ENCODE measurements at regions of chr4 and their contacts with region 1.

Region 1: DNA sequence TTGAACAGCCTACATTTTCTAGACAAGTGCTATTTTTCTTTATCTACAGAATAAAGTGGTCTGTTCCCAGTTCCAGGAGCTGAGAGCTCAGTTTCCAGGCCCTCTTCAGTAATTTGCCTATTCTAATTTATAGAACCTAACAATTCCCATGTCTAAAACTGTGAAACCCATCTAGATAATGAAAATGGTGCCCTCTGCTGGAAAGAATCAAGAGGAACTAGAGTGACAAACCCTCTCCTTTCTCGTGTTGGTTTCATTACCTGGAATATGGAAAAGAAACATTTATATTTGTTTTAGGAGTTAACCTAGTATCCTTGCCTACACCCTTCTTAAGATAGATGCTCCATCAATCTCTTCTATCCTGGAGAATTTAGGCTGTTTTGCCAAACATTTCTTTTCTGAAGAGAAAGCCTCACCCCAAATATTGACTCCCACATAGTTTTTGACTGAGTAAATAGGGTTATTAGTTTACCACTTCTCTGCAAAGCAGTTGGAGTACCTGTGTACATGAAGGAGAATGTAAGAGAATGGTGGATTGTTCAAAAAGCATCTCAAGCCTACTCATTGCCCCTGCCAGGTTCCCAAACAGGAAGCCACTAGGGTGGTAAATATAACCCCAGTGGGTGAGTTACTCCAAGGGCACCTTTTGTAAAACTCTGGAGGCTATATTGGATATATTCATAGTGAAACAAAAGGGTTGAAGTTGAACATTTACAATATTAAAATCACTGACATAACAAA is 121.6 kb downstream of the RASL11B start:
- DNase-seq: no peak
- H3K4me3 Mint-ChIP-seq: no peak overlapping the region
- H3K27ac Mint-ChIP-seq: no peak overlapping the region
- H3K4me1 Mint-ChIP-seq: peaks cover 3% of the 10 kb centered on the region
- H3K27me3 Mint-ChIP-seq: no peaks in the 10 kb centered on the region

Region 2: DNA sequence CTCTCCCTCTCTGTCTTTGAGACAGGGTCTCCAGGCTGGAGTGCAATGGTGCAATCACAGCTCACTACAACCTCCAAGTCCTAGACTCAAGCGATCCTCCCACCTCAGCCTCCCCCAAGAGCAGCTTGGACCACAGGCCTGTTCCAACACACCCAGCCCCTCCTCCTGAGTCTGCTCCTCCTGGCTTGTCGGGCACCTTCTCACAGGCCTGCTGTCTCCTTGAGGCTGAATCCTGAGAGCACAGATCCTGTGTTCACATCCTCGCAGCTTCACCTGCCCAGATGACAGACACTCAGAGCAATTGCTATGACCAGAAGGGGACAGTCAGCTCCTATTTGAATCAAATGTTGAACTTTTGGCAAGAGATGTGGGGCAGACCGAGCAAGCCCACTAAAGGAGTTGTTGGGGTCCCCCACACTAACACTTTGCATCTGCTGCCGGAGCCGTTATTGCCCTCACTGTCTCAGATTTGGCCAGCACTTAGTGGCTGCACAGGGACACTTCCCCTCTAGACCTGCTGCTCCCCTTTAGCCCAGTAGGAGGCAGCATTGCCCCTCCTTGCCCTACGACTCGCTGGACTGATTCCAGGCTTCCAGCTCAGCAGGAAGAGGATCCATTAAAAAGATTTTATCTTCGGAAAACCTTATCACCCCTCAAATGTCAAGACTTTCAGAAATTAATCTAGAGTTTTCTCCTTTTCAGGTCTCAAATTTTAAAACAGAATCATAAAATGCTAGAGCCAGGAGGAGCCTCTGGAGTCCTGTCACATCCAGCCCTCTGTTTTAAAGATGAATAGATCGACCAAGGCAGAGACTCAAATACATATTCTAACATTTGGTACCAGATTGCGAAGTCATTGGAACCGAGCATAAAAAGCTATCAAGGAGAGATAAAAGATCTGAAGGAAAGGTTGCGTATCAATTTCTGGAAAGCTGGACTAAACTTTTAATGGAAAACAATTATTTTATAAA is 438.3 kb before region 1 on chr4:
- intact Hi-C with region 1: loop called (anchors 5 kb)
- DNase-seq: peak; percentile 35
- H3K4me3 Mint-ChIP-seq: no peak overlapping the region
- H3K27ac Mint-ChIP-seq: no peak overlapping the region
- H3K4me1 Mint-ChIP-seq: no peaks in the 10 kb centered on the region
- H3K27me3 Mint-ChIP-seq: no peaks in the 10 kb centered on the region

Region 3: DNA sequence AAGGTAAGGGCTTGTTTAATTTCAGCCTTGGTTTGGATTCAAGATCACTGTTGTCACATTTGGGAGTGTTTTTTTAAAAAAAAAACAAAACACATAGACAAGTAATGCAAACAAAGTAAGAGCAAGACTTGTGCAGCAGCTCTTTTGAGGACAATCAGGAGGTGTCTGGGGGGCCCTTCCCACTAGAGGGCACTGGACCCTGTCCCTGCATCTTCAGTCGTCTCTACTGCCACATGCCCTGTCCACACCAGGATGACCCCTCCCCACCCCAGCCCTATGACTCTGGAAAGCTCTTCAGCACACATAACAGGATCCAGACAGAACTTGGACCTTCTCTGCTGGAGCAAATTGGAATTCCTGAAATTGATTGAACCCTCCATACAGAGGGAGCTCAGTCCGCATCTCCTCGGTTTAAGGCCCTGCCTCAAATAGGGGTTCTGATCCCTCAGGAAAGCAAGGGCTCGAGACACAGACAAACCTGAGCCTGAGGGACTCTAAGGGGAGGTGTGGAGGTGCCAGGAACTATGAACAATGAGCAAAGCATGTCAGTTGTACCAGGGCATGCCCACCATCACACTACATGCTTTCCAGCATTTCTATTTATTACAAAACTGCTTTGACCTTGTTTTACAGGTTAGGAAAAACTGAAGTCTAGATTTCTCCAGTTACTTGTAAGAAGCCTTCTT is 395.5 kb before region 1 on chr4:
- intact Hi-C with region 1: loop called (anchors 5 kb)
- DNase-seq: no peak
- H3K4me3 Mint-ChIP-seq: no peak overlapping the region
- H3K27ac Mint-ChIP-seq: peak overlapping the region; percentile 53
- H3K4me1 Mint-ChIP-seq: peaks cover 17% of the 10 kb centered on the region
- H3K27me3 Mint-ChIP-seq: peaks cover 3% of the 10 kb centered on the region

Region 4: GRCh38 chr4:52659001-52659721 is 324.6 kb before region 1 on chr4 and contains the start of gene USP46:
- intact Hi-C with region 1: loop called (anchors 5 kb)
- DNase-seq: peak; percentile 28
- H3K4me3 Mint-ChIP-seq: peak within 1 kb of the TSS; percentile 82
- H3K27ac Mint-ChIP-seq: peak within 1 kb of the TSS; percentile 62
- H3K4me1 Mint-ChIP-seq: peaks cover 15% of the 10 kb centered on the region
- H3K27me3 Mint-ChIP-seq: peaks cover 10% of the 10 kb centered on the region
- total RNA-seq, gene USP46: 7.7 and 8.9 TPM in 2 replicates

Region 5: DNA sequence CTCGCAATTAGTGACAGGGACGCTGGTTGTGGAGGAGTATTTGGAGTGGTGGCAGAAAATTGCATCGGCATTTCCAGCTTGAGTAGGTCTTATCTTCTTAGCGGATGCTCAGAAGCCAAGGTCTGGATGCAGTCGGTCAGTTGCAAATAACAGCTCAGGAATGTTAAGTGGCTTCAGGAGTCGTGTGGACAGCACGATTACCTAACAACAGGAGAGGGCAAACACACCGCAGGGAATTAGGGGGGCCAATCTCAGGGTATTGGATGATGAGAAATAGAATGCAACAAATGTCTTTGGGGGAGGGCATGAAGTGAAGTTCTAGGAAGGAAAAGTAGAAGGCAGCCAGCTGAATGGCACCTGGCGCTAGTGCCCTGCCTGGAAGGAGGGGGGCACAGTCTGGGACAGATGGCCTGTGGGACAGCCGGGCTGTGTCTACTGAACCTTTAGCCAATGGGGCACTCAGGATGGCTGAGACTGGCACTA is 109.8 kb before region 1 on chr4:
- intact Hi-C with region 1: no loop called
- DNase-seq: no peak
- H3K4me3 Mint-ChIP-seq: no peak overlapping the region
- H3K27ac Mint-ChIP-seq: no peak overlapping the region
- H3K4me1 Mint-ChIP-seq: peaks cover 5% of the 10 kb centered on the region
- H3K27me3 Mint-ChIP-seq: no peaks in the 10 kb centered on the region

Measured in activated T-helper 2 cell treated with anti-CD3 and anti-CD28 coated beads, Interferon-gamma antibody, Interleukin-2, Interleukin-4, amounts not matched to agents 10 μg/mL and 5 μg/mL and 100 μg/mL, durations not matched to agents 14 hours and 24 hours and 36 hours (primary cell).